A673 (cell line): ENCODE measurements at regions of chr20 and their contacts with region 1.

Region 1: GRCh38 chr20:25399037-25399430 is 8.4 kb upstream of the ABHD12 start:
- DNase-seq: peak; percentile 81
- H3K4me3 ChIP-seq: no peak overlapping the region
- H3K27ac ChIP-seq: no peak overlapping the region
- H3K4me1 ChIP-seq: no peaks in the 10 kb centered on the region
- H3K27me3 ChIP-seq: no peaks in the 10 kb centered on the region
- CTCF ChIP-seq: peak; percentile 67

Region 2: GRCh38 chr20:25294459-25295385 is 104.3 kb before region 1 on chr20:
- CTCF ChIA-PET with region 1: interaction called, 4 read pairs
- POLR2A ChIA-PET with region 1: no interaction called
- intact Hi-C with region 1: loop called (anchors 2 kb)
- DNase-seq: peak; percentile 70
- H3K4me3 ChIP-seq: no peak overlapping the region
- H3K27ac ChIP-seq: no peak overlapping the region
- H3K4me1 ChIP-seq: no peaks in the 10 kb centered on the region
- H3K27me3 ChIP-seq: no peaks in the 10 kb centered on the region
- CTCF ChIP-seq: peak; percentile 94

Region 3: GRCh38 chr20:25336561-25337422 is 62.2 kb before region 1 on chr20:
- CTCF ChIA-PET with region 1: interaction called, 6 read pairs
- POLR2A ChIA-PET with region 1: no interaction called
- intact Hi-C with region 1: loop called (anchors 2 kb)
- DNase-seq: peak; percentile 31
- H3K4me3 ChIP-seq: no peak overlapping the region
- H3K27ac ChIP-seq: no peak overlapping the region
- H3K4me1 ChIP-seq: no peaks in the 10 kb centered on the region
- H3K27me3 ChIP-seq: no peaks in the 10 kb centered on the region
- CTCF ChIP-seq: peak; percentile 53